Heart right ventricle (tissue), 16 donors: ENCODE measurements at regions of chr1 and their contacts with region 1.

Region 1: GRCh38 chr1:173925306-173926242 is 8.4 kb upstream of the SERPINC1 start:
- DNase-seq: no peak
- ATAC-seq: no peak
- H3K4me3 ChIP-seq: no peak overlapping the region
- H3K27ac ChIP-seq: no peak overlapping the region
- H3K4me1 ChIP-seq: no peaks in the 10 kb centered on the region
- H3K27me3 ChIP-seq: no peaks in the 10 kb centered on the region
- CTCF ChIP-seq: no peak

Region 2: DNA sequence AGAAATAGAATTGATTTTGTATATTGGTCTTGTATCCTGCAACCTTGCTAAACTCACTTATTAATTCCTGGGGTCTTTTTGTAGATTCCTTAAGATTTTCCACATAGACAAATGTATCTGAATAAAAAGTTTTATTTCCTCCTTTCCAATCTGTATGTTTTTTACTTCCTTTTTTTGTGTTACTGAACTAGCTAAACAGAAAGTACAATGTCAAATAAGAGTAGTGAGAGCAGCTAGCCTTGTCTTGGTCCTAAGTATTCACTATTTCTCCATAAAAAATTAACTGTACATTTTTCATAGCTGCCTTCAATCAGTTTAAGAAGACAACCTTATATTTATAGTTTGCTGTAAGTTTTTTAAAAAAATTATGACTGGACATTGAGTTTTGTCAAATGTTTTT is 1191.8 kb before region 1 on chr1:
- intact Hi-C with region 1: loop called in 1 of 10 experiments (anchors 10 kb)
- DNase-seq: no peak
- ATAC-seq: no peak
- H3K4me3 ChIP-seq: no peak overlapping the region
- H3K27ac ChIP-seq: no peak overlapping the region
- H3K4me1 ChIP-seq: no peaks in the 10 kb centered on the region
- H3K27me3 ChIP-seq: peaks cover 0 to 3% (median 0%) of the 10 kb centered on the region in 7 donors
- CTCF ChIP-seq: no peak

Region 3: DNA sequence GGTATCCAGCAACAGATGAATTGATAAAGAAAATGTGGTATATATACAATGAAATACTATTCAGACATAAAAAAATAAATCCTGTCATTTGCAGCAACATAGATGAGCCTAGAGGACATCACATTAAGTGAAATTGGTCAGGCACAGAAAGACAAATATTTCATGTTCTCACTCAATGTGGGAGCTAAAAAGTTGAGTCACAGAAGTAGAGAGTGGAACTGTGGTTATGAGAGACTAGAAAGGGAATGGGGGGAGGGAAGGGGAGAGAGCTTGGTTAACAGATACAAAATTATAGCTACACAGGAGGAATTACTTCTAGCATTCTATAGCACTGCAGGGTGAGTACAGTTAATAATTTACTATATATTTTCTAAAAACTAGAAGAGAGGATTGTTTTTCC is 28.6 kb after region 1 on chr1:
- intact Hi-C with region 1: no loop called
- DNase-seq: no peak
- ATAC-seq: no peak
- H3K4me3 ChIP-seq: no peak overlapping the region
- H3K27ac ChIP-seq: no peak overlapping the region
- H3K4me1 ChIP-seq: no peaks in the 10 kb centered on the region
- H3K27me3 ChIP-seq: no peaks in the 10 kb centered on the region
- CTCF ChIP-seq: no peak